ENCODE measurements at regions of chr22 and their contacts with region 1.

Region 1: DNA sequence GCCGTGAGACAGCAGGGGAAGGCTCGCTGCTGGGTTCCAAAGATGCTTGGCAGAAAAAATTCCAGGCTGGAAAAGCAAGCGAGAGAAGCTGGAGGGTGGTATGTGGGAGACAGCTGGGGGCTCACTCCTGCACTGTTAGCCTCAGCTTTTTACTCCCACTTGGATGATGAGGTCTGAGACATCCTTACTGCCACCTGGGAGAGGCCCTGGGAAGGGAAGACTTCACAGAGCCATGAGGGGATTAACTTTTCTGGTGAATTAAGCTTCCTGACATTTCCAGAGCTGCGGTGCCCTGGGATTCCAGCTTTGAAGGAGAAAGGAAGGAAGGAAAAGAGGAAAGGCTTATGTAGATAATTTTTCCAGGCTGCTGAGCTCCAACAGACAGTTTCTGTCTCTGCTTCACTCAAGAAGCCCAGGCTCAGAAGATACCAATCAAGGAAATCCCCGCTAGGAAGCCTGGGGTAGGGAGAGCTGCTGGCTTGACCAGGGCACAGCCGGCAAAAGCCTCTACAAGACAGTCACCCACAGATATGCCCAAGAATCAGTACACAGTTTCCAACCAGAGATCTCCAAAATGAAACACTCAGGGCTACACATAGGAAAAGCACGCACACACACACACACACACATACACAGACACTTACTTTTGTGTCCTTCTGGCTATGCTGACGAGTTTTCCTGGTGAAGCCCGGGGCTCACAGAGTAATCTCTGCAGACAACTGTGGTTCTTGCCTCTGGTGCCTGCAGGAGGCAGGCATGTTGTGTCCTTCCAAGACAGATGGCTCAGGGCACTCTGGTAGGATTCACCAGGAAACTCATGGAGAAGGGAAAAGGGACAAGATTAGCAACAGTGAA is 907 bp downstream of the MCHR1 start:
- DNase-seq: no peak
- H3K4me3 Mint-ChIP-seq: no peak overlapping the region
- H3K27ac Mint-ChIP-seq: no peak overlapping the region
- H3K4me1 Mint-ChIP-seq: peaks cover 22% of the 10 kb centered on the region
- H3K27me3 Mint-ChIP-seq: peaks cover 17% of the 10 kb centered on the region

Region 2: GRCh38 chr22:40636380-40637182 is 43.6 kb before region 1 on chr22 and contains the start of gene MRTFA:
- CTCF ChIA-PET with region 1: interaction called, 11 read pairs
- POLR2A ChIA-PET with region 1: no interaction called
- intact Hi-C with region 1: no loop called
- DNase-seq: peak; percentile 100
- H3K4me3 Mint-ChIP-seq: peak within 1 kb of the TSS; percentile 91
- H3K27ac Mint-ChIP-seq: peak within 1 kb of the TSS; percentile 89
- H3K4me1 Mint-ChIP-seq: peaks cover 40% of the 10 kb centered on the region
- H3K27me3 Mint-ChIP-seq: no peaks in the 10 kb centered on the region
- total RNA-seq, gene MRTFA: 44.1 to 45.5 TPM

Region 3: GRCh38 chr22:40668611-40669411 is 11.4 kb before region 1 on chr22:
- CTCF ChIA-PET with region 1: interaction called, 7 read pairs
- POLR2A ChIA-PET with region 1: no interaction called
- intact Hi-C with region 1: loop called (anchors 1 kb)
- DNase-seq: peak; percentile 45
- H3K4me3 Mint-ChIP-seq: peak overlapping the region; percentile 6
- H3K27ac Mint-ChIP-seq: peak overlapping the region; percentile 81
- H3K4me1 Mint-ChIP-seq: peaks cover 23% of the 10 kb centered on the region
- H3K27me3 Mint-ChIP-seq: no peaks in the 10 kb centered on the region

Region 4: GRCh38 chr22:40714192-40714951 is 34.2 kb after region 1 on chr22:
- CTCF ChIA-PET with region 1: interaction called, 25 read pairs
- POLR2A ChIA-PET with region 1: interaction called, 4 read pairs
- intact Hi-C with region 1: no loop called
- DNase-seq: no peak
- H3K4me3 Mint-ChIP-seq: no peak overlapping the region
- H3K27ac Mint-ChIP-seq: no peak overlapping the region
- H3K4me1 Mint-ChIP-seq: peaks cover 12% of the 10 kb centered on the region
- H3K27me3 Mint-ChIP-seq: peaks cover 7% of the 10 kb centered on the region

Region 5: DNA sequence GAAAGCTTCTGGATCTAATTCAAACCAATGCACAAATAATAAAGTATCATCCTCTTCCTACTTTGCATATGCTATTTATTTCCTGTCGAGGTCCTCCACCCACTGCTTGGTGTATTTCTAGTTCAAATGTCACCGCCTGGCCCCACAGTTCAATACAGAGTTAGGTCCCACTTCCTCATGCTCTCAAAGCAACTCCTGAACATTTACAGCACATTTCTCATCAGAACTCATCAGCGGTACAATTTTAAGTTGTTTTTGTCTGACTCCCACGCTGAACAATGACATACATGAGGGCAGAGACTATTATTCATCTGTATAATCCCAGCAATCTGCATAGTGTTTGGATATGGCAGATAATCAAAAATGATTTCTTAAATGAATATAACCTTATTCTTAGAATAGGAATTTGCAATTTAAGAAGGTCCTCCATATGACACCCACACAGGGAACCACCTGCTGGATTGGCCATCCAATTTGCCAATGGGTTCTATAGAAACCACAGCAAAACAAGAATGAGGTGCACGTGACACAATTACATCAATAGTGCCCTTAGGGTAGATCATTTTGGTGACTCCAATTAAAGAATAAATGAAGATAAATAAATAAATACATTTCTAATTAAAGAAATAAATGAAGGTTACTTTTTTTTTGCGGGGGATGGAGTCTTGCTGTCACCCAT is 84.7 kb after region 1 on chr22:
- CTCF ChIA-PET with region 1: interaction called, 92 read pairs
- POLR2A ChIA-PET with region 1: interaction called, 3 read pairs
- intact Hi-C with region 1: loop called (anchors 1 kb)
- DNase-seq: peak; percentile 36
- H3K4me3 Mint-ChIP-seq: no peak overlapping the region
- H3K27ac Mint-ChIP-seq: peak overlapping the region; percentile 70
- H3K4me1 Mint-ChIP-seq: peaks cover 17% of the 10 kb centered on the region
- H3K27me3 Mint-ChIP-seq: no peaks in the 10 kb centered on the region

Region 6: DNA sequence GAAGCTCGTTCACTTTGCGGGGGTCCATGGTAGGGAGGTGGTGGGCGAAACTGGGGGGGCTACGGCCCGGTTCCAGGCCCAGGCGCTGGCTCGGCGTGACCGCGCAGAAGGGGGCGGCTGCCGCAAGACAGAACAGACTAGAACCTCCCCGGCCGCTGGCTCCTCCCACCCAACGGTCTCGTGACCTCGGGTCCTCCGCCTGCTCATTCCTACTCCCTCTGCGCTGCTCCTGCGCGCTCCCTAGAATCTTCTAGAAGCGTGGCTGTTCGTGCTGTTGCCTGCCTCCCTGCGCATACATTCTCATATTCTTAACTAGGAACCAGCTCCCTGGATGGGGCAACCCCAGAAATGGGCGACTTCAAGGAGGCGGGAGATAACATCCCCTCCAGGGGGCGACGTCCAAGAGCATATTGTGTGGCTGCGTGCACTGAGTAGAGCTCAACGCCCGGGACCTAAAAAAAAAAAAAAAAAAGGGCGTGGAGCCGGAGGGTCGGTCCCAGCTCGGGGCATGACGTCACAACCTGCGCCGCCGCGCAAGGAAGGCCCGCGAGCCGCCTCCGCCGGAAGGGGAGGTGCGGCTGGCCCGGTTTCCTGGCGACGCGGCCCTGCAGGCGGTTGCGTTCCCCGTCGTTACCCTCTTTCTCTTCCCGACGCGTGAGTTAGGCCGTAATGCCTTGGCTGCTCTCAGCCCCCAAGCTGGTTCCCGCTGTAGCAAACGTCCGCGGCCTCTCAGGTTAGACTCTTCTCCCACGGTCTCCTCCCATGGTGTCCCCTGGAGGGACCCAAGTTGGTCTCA is 176.5 kb after region 1 on chr22 and contains the starts of genes ST13 and XPNPEP3:
- CTCF ChIA-PET with region 1: interaction called, 20 read pairs
- POLR2A ChIA-PET with region 1: interaction called, 3 read pairs
- intact Hi-C with region 1: loop called (anchors 1 kb)
- DNase-seq: peak; percentile 98
- H3K4me3 Mint-ChIP-seq: peak within 1 kb of the TSS; percentile 98
- H3K27ac Mint-ChIP-seq: peak within 1 kb of the TSS; percentile 99
- H3K4me1 Mint-ChIP-seq: peaks cover 48% of the 10 kb centered on the region
- H3K27me3 Mint-ChIP-seq: no peaks in the 10 kb centered on the region
- total RNA-seq, gene ST13: 240 to 263 TPM
- total RNA-seq, gene XPNPEP3: 19.4 to 20.1 TPM

Measured in activated CD4-positive, alpha-beta memory T cell treated with anti-CD3 and anti-CD28 coated beads for 36 hours (primary cell).